Right ventricle myocardium superior (tissue), 1 donor: ENCODE measurements at regions of chr3 and their contacts with region 1.

Region 1: DNA sequence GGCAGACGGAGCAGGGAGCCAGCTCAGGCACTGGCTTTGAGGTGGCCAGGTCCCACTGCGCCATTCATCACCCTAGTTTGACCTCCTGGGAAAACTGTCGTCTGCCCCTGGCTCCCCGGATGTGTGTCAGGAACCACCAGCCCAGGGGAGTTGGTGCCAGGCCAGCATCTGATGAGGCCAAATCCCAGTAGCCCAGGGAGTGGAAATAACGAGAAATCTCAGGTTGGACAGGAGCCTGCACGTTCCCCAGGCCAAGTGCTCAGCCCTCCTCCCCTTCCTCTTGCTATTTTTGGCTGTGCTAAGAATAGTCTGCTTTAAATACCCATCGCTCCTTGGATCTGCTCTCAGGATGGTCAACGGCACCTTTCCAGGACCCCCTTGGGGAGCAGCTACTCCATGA is 93.1 kb upstream of the RPL32 start:
- DNase-seq: peak; percentile 83
- ATAC-seq: peak; percentile 68

Region 2: DNA sequence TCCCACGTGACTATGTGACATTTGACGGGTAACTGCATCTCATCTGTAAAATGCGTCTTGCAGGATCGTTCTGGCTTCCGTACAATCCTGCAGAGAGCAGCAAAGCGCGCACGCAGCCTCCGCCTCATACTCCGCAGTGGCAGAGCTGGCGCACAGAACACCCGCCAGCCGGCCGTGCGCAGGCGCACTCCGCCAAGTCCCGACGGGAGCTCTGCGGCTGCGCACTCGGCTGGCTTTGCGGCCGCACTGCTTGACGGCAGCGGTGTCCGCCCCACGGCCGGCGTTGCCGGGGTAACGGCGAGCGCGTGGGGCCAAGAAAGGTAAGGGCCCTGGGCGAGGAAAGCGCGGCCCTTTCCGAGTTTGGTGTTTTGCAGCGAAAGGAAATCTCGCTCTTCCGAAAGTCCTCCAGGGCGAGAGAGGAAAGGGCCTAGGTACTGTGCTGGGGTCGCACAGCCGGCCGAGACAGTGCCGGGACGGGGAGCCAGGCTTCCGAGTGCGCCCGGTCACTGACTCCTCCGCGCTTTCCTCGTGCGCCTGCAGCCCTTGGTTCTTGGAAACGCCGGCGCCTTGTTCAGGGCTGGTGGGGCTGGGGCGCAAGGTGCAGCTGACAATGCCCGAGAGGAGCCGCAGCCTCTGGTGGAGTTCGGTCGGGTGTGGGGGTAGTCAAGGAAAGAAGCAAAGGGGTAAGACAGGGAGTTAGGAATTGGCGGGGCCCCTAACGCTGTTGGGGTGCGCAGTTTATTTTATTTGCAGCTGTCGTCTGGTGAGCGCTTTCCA is 450.0 kb before region 1 on chr3 and contains the start of gene TSEN2:
- intact Hi-C with region 1: no loop called
- DNase-seq: peak; percentile 97
- ATAC-seq: peak; percentile 97
- total RNA-seq, gene TSEN2: 24.6 TPM

Region 3: GRCh38 chr3:12984023-12984823 is 49.8 kb after region 1 on chr3:
- intact Hi-C with region 1: loop called (anchors 5 kb)
- DNase-seq: peak; percentile 75
- ATAC-seq: peak; percentile 87